Endothelial cell of umbilical vein (primary cell): ENCODE measurements at regions of chr1 and their contacts with region 1.

Region 1: DNA sequence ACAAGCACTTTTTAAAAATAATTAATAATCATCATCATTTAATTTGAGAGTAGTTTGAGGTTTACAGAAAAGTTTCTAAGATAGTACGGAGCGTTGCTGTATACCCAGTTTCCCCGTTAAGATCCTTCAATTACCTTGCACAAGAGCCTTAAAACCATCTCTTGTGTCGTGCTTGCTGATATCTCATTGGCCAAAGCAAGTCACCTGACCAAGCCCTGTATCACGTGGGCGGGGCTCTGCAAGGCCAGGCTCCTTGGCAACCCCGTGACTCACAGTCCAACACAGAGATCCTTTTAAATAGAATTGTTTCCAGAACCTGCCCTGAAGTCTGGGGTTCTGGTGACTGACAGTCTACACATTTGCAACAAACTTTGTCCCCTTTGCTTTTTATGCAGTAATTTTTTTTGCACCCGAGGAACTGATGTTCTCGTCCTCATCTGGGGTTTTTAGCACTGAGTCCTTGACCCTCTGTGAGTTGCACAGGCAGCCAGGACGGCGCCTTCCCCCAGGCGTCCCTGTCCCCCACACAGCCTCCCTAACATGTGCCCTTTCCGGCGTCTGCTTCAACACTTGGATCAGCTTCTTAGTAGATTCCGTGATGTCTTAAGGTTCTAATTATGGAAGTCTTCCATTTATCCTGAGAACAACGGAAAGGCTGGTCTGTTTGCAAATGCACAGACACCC is 183.3 kb upstream of the TMEM51 start:
- DNase-seq: peak; percentile 39
- H3K4me3 ChIP-seq: no peak overlapping the region
- H3K27ac ChIP-seq: no peak overlapping the region
- H3K4me1 ChIP-seq: peaks cover 2% of the 10 kb centered on the region
- H3K27me3 ChIP-seq: no peaks in the 10 kb centered on the region
- CTCF ChIP-seq: no peak
- POLR2A ChIP-seq: no peak

Region 2: GRCh38 chr1:14923727-14924452 is 46.4 kb before region 1 on chr1:
- CTCF ChIA-PET with region 1: no interaction called
- POLR2A ChIA-PET with region 1: no interaction called
- dilution Hi-C with region 1: no loop called
- intact Hi-C with region 1: loop called (anchors 2 kb)
- DNase-seq: peak; percentile 20
- H3K4me3 ChIP-seq: peak overlapping the region in 1 of 3 experiments; percentile 62
- H3K27ac ChIP-seq: no peak overlapping the region
- H3K4me1 ChIP-seq: peaks cover 5% of the 10 kb centered on the region
- H3K27me3 ChIP-seq: peaks cover 8 to 14% of the 10 kb centered on the region in 2 experiments
- CTCF ChIP-seq: no peak
- POLR2A ChIP-seq: no peak

Region 3: DNA sequence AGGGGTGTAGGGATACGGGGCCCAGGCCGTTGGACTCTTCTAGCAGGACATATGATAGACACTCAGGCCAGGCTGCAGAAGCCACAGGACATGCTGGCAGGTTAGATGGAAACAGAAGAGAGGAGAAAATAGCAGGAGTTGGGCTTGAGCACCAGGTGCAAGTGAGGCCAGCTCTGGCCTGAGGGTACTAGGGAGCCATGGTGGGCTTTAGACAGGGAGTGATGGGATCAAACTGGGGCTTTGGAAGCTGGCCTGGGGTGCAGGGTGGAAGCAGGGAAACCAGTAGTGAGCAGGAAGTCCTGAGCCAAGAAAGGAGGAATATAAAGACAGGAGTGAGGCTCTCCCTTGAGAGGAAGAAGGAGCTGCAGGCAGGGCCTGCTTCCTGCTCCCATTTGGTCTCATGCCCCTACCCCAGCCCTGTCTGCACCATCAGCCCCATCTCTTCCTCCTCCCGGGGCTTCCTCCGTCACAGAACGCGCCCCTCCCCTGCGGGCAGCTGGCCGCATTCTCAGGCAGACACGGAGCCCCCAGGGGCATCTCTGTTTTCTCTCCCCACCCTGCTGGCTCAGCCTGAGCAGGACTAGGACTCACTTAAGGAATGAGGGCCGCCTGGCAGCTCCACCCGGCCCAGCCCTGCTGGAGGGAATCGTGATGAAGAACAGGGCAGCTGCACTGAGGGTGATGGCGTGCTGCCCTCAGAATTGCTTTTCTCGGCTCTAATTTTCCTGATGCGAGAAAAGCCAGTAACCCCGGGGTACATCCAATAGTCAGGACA is 17.8 kb after region 1 on chr1:
- CTCF ChIA-PET with region 1: no interaction called
- POLR2A ChIA-PET with region 1: no interaction called
- dilution Hi-C with region 1: no loop called
- intact Hi-C with region 1: no loop called
- DNase-seq: no peak
- H3K4me3 ChIP-seq: no peak overlapping the region
- H3K27ac ChIP-seq: no peak overlapping the region
- H3K4me1 ChIP-seq: no peaks in the 10 kb centered on the region
- H3K27me3 ChIP-seq: no peaks in the 10 kb centered on the region
- CTCF ChIP-seq: no peak
- POLR2A ChIP-seq: no peak

Region 4: DNA sequence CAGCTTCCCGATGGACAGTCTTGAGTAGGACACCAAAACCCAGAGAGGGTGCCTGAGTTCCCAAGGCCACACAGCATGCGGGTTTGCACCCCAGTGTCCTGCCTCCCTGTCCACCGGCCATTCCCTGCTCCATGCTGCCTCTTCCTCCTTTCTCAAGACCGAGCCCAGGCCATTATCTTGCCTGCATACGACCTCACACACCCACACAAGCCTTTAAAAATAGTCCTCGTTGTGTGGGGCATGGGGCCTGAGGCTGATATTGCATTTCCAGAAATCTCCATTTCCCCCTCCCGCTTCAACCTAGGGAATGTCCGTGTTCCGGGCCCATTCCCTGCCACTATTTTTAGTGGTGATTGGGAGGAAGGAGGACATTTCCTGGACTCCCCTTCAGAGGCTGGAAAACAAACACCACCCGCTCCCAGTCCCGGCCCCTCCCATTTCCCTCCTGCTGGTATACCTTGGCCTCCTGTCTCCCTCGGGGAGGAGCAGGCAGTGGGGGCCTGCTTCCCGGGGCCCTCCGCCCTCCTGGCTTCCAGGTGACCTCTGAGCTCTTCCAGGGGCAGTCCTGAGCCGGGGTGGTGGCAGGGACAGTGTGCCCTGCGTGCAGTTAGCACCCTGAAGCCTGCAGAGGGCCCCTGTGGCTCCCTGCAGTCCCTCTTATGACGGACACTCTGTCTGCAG is 50.9 kb after region 1 on chr1:
- CTCF ChIA-PET with region 1: no interaction called
- POLR2A ChIA-PET with region 1: no interaction called
- dilution Hi-C with region 1: no loop called
- intact Hi-C with region 1: no loop called
- DNase-seq: peak; percentile 22
- H3K4me3 ChIP-seq: no peak overlapping the region
- H3K27ac ChIP-seq: no peak overlapping the region
- H3K4me1 ChIP-seq: peaks cover 13% of the 10 kb centered on the region
- H3K27me3 ChIP-seq: no peaks in the 10 kb centered on the region
- CTCF ChIP-seq: no peak
- POLR2A ChIP-seq: no peak